Prostate gland (tissue), 2 donors: ENCODE measurements at regions of chr5 and their contacts with region 1.

Region 1: GRCh38 chr5:123367739-123368138 is 55.5 kb downstream of the CEP120 start:
- DNase-seq: no peak
- H3K4me3 ChIP-seq: no peak overlapping the region
- H3K27ac ChIP-seq: no peak overlapping the region
- H3K4me1 ChIP-seq: no peaks in the 10 kb centered on the region
- H3K27me3 ChIP-seq: no peaks in the 10 kb centered on the region
- CTCF ChIP-seq: peak in 1 of 4 experiments; percentile 35
- POLR2A ChIP-seq: no peak

Region 2: GRCh38 chr5:122515709-122516431 is 851.9 kb before region 1 on chr5:
- intact Hi-C with region 1: loop called (anchors 5 kb)
- DNase-seq: peak; percentile 39
- H3K4me3 ChIP-seq: no peak overlapping the region
- H3K27ac ChIP-seq: no peak overlapping the region
- H3K4me1 ChIP-seq: no peaks in the 10 kb centered on the region
- H3K27me3 ChIP-seq: no peaks in the 10 kb centered on the region
- CTCF ChIP-seq: peak in 3 of 4 experiments; percentile 29 to 68 (median 54)
- POLR2A ChIP-seq: no peak

Region 3: DNA sequence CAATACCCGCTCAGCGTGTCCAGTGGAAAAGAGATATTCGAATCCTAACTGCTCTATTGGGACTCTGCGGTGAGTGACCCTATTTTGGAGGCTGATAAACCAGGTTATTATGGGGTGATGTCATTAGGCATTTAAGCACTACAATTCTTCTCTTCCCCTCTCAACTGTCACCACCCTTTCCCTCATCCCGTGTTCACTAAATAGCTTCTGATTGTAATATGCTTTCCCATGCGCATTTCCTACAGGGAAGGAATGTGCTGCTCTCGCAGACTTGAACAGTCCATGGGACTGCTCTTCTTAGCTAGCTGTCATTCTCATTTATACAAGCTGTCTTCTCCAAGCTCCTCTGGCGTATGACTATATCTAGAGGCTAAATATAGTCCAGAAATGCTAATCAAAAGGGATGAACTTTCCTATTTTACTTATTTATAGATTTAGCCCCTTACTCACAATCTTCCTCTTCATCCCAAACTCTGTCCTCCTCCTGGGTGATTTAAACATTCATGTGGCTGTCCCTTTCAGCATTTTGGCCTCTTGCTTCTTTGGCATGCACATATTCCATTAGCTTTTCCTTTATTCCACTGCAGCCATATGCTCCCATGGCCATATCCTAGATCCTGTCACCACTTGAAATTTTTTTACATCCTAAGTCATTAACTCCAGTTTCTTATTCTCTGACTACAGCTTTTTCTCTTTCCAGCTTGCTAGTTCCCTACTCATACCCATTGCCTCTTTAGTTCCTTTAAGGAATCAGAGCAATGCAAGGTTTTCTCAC is 104.6 kb after region 1 on chr5:
- intact Hi-C with region 1: no loop called
- DNase-seq: no peak
- H3K4me3 ChIP-seq: no peak overlapping the region
- H3K27ac ChIP-seq: no peak overlapping the region
- H3K4me1 ChIP-seq: no peaks in the 10 kb centered on the region
- H3K27me3 ChIP-seq: no peaks in the 10 kb centered on the region
- CTCF ChIP-seq: no peak
- POLR2A ChIP-seq: no peak

Region 4: GRCh38 chr5:123511648-123512605 is 144.2 kb after region 1 on chr5 and contains the start of gene CSNK1G3:
- intact Hi-C with region 1: no loop called
- DNase-seq: peak; percentile 95
- H3K4me3 ChIP-seq: peak within 1 kb of the TSS; percentile 90 to 91
- H3K27ac ChIP-seq: peak within 1 kb of the TSS; percentile 89 to 91
- H3K4me1 ChIP-seq: no peaks in the 10 kb centered on the region
- H3K27me3 ChIP-seq: no peaks in the 10 kb centered on the region
- CTCF ChIP-seq: peak in 1 of 4 experiments; percentile 9
- POLR2A ChIP-seq: peak; percentile 75
- total RNA-seq, gene CSNK1G3: 37.1 to 43.1 TPM